Colonic mucosa (tissue), 4 donors: ENCODE measurements at regions of chr1 and their contacts with region 1.

Region 1: GRCh38 chr1:8910914-8911313 is 32.4 kb upstream of the ENO1 start:
- DNase-seq: no peak
- H3K4me3 ChIP-seq: no peak overlapping the region
- H3K27ac ChIP-seq: no peak overlapping the region
- H3K4me1 ChIP-seq: no peaks in the 10 kb centered on the region
- H3K27me3 ChIP-seq: no peaks in the 10 kb centered on the region
- CTCF ChIP-seq: no peak

Region 2: GRCh38 chr1:8409106-8409505 is 501.8 kb before region 1 on chr1:
- intact Hi-C with region 1: no loop called
- DNase-seq: no peak
- H3K4me3 ChIP-seq: no peak overlapping the region
- H3K27ac ChIP-seq: peak overlapping the region; percentile 88
- H3K4me1 ChIP-seq: peaks cover 39% of the 10 kb centered on the region
- H3K27me3 ChIP-seq: no peaks in the 10 kb centered on the region
- CTCF ChIP-seq: peak; percentile 41

Region 3: GRCh38 chr1:8754993-8755392 is 155.9 kb before region 1 on chr1:
- intact Hi-C with region 1: no loop called
- DNase-seq: no peak
- H3K4me3 ChIP-seq: no peak overlapping the region
- H3K27ac ChIP-seq: no peak overlapping the region
- H3K4me1 ChIP-seq: no peaks in the 10 kb centered on the region
- H3K27me3 ChIP-seq: no peaks in the 10 kb centered on the region
- CTCF ChIP-seq: no peak

Region 4: DNA sequence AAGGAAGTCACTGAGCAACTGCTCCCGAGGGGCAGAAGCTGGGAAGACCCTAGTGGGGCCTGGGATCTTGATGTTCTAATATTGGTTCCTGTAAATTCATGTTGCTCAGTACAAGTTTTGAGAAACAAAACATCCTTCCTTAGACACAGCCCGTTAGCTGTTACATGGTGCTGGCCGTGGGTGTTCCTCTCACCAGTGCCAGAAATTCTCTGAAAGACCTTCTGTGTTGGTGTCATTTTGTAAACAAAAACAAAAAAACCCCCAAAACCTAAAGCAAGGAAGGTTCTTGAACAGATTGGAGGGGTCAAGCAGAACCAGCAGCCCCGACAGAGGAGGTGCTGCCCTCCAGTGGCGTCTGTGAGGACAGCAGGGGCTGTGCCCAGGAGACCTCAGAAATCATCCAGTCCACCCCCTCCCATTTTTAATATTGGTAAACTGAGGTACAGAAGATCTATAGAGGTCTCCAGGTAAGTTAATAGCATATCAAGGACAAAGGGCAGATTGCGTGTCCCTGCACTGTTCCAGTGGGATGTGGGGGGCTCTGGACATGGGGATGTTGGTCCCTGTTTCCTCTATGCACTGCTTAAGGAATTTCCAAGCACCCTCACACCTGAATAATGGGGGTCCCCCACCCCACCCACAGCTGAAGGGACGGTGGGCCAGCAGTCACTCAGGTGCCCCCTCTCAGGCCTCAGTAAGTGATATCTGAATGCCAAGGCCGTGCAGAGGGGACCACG is 77.1 kb after region 1 on chr1:
- intact Hi-C with region 1: loop called (anchors 5 kb)
- DNase-seq: peak; percentile 54
- H3K4me3 ChIP-seq: no peak overlapping the region
- H3K27ac ChIP-seq: no peak overlapping the region
- H3K4me1 ChIP-seq: no peaks in the 10 kb centered on the region
- H3K27me3 ChIP-seq: no peaks in the 10 kb centered on the region
- CTCF ChIP-seq: peak; percentile 97

Region 5: GRCh38 chr1:9004700-9005394 is 93.9 kb after region 1 on chr1:
- intact Hi-C with region 1: loop called (anchors 5 kb)
- DNase-seq: peak; percentile 91
- H3K4me3 ChIP-seq: no peak overlapping the region
- H3K27ac ChIP-seq: no peak overlapping the region
- H3K4me1 ChIP-seq: no peaks in the 10 kb centered on the region
- H3K27me3 ChIP-seq: no peaks in the 10 kb centered on the region
- CTCF ChIP-seq: peak; percentile 88

Region 6: DNA sequence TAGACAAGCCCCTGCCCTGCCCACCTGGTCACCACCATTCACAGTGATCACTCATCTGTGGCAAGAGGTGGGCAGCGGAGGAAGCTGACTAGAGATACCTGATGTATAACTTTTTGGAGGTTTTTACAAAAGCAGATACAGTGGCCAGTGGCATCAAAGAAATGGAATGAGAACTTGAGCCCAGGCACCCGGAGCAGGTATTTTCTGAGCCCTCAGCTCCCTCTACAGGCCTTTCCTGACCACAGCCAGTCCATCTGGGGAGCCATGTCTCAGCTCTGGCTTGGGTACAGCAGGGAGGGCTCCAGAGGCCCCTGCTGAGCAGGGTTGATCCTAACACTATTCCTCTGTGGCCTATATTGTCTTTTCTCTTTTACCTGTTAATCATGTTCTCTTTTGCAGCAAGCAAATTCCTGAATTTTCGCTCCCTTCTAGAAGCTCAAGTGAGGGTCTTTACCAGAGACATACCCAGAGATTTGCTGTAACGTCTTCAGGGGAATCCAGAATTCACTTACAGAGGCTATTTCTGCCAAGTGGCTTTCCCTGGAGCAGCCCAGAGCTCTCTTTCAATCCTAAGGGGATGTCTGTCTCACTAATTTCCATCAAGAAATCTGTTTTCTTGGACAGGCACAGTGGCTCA is 190.7 kb after region 1 on chr1:
- intact Hi-C with region 1: loop called (anchors 5 kb)
- DNase-seq: peak; percentile 52
- H3K4me3 ChIP-seq: no peak overlapping the region
- H3K27ac ChIP-seq: no peak overlapping the region
- H3K4me1 ChIP-seq: no peaks in the 10 kb centered on the region
- H3K27me3 ChIP-seq: no peaks in the 10 kb centered on the region
- CTCF ChIP-seq: peak; percentile 68

Region 7: GRCh38 chr1:9201401-9202239 is 290.7 kb after region 1 on chr1:
- intact Hi-C with region 1: loop called (anchors 10 kb)
- DNase-seq: no peak
- H3K4me3 ChIP-seq: no peak overlapping the region
- H3K27ac ChIP-seq: no peak overlapping the region
- H3K4me1 ChIP-seq: peaks cover under 1% of the 10 kb centered on the region
- H3K27me3 ChIP-seq: peaks cover 65% of the 10 kb centered on the region
- CTCF ChIP-seq: no peak